Dorsolateral prefrontal cortex (tissue), 120 donors: ENCODE measurements at regions of chr11 and their contacts with region 1.

Region 1: DNA sequence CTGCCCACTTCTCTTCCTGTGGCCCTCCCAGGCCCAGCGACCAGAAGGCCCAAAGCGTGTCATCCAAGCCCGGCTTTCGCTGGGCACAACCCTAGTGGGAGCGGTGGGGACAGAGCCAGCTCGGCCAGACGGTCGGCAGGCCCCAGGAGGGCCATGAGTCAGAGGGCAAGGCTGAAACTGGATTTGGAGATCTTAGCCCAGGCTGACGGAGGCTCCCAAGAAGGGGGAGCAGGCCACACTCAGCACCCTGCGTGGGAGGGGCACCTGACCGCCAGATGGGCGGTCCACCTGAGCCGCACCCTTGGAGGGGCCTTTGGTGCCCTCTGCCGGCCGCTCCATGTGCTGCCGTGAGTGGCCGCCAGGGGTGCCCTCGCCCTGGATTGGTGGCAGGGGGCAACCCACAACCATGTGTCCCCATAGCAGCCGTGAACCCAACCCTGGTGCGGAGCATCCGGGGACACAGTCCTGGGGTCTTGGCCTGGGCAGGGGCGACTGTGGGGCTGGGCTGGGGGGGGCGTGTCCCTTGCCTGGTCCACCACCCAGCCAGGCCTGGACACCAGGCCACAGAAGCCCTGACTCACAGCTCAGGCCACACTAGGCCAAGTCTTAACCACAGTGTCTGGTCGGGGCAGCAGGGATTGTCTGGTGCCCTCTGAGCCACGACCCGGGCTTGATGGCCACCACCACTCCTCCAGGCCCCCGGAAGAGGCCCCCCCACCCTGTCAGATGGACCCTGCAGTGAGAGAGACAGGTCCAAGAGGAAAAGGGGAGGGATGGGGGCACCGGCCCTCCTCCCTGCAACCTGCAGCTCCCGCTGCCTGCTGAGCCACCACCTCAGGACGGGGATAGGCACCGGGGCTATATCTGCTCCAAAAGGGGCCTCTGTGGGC is 19.2 kb upstream of the TALDO1 start:
- DNase-seq: peak; percentile 67 to 85 (median 76)
- H3K4me3 ChIP-seq: peak overlapping the region in 6 of 59 donors; percentile 12 to 65 (median 24)
- H3K27ac ChIP-seq: peak overlapping the region; percentile 65 to 99 (median 96)
- H3K27me3 ChIP-seq: peaks cover 0 to 46% (median 12%) of the 10 kb centered on the region in 45 donors
- CTCF ChIP-seq: peak; percentile 41 to 100 (median 97)

Region 2: GRCh38 chr11:554824-555472 is 173.2 kb before region 1 on chr11:
- intact Hi-C with region 1: loop called (anchors 2 kb)
- DNase-seq: peak in 2 of 10 donors; percentile 62 to 73
- H3K4me3 ChIP-seq: peak overlapping the region in 38 of 59 donors; percentile 11 to 54 (median 34)
- H3K27ac ChIP-seq: no peak overlapping the region
- H3K27me3 ChIP-seq: peaks cover 0 to 81% (median 56%) of the 10 kb centered on the region in 45 donors
- CTCF ChIP-seq: peak; percentile 12 to 67 (median 50)

Region 3: DNA sequence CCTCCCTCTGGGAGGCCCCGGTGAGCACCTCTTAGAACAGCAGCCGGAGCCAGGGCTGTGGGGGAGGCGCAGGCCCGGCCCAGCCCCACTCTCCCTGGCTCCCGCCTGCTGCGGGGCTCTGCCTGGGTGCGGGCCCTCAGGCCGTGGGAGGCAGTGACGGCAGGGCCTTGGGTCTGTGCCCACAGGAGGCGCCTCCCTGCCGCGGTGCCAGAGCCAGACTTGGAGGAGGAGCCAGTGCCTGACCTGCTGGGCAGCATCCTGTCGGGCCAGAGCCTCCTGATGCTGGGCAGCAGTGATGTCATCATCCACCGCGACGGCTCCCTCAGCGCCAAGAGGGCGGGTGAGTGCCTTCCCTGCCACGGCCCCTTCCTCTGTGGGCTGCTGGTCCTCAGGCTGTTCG is 121.8 kb before region 1 on chr11:
- intact Hi-C with region 1: no loop called
- DNase-seq: peak in 8 of 10 donors; percentile 33 to 88 (median 64)
- H3K4me3 ChIP-seq: no peak overlapping the region
- H3K27ac ChIP-seq: peak overlapping the region in 34 of 59 donors; percentile 5 to 82 (median 49)
- H3K27me3 ChIP-seq: no peaks in the 10 kb centered on the region
- CTCF ChIP-seq: no peak

Region 4: GRCh38 chr11:662689-663274 is 65.3 kb before region 1 on chr11:
- intact Hi-C with region 1: loop called (anchors 1 to 5 kb)
- DNase-seq: peak in 9 of 10 donors; percentile 50 to 79 (median 69)
- H3K4me3 ChIP-seq: no peak overlapping the region
- H3K27ac ChIP-seq: no peak overlapping the region
- H3K27me3 ChIP-seq: no peaks in the 10 kb centered on the region
- CTCF ChIP-seq: peak; percentile 35 to 93 (median 79)

Region 5: DNA sequence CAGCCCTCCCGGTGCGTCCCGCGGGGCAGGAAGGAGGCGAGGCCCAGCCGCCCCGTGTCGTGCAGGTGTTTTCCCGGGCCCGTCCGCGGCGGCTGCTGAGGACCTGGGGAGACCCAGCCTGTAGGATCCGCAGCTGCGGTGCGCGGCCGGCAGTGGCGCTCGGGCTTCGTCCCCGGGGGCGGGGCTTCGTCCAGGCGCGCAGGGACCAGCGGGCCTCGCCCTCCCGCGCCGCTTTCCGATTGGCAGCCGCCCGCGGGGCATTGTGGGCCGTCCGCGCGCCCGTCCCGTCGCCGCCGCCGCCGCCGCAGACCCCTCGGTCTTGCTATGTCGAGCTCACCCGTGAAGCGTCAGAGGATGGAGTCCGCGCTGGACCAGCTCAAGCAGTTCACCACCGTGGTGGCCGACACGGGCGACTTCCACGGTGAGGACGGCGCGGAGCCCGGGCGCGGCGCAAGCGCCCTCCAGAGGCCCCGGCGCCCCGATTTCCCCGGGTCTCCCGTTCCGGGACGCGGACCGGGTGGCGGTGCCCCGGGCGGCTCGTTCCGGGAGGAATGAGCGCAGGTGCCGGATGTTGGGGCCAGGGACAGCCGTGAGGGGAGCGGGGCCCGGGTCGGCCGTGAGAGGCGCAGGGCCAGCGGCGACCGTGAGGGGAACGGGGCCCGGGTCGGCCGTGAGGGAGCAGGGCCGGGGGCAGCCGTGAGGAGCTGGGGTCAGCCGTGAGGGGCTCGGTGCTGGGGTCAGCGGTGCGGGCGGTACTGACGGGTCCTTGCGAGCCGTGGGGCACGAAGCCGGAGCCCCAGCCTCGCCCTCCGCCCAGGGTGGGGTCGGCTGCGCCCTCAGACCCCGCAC is 19.3 kb after region 1 on chr11 and contains the start of gene TALDO1:
- intact Hi-C with region 1: loop called in 1 of 2 experiments (anchors 2 kb)
- DNase-seq: peak; percentile 87 to 98 (median 93)
- H3K4me3 ChIP-seq: peak within 1 kb of the TSS; percentile 72 to 99 (median 96)
- H3K27ac ChIP-seq: peak within 1 kb of the TSS; percentile 89 to 99 (median 97)
- H3K27me3 ChIP-seq: no peaks in the 10 kb centered on the region
- CTCF ChIP-seq: peak in 49 of 56 donors; percentile 11 to 62 (median 32)
- total RNA-seq, gene TALDO1: 58.9 to 258 (median 114) TPM

Region 6: GRCh38 chr11:765025-765801 is 37.1 kb after region 1 on chr11:
- intact Hi-C with region 1: loop called (anchors 1 to 5 kb)
- DNase-seq: peak in 8 of 10 donors; percentile 44 to 78 (median 70)
- H3K4me3 ChIP-seq: no peak overlapping the region
- H3K27ac ChIP-seq: peak overlapping the region in 52 of 59 donors; percentile 4 to 84 (median 59)
- H3K27me3 ChIP-seq: no peaks in the 10 kb centered on the region
- CTCF ChIP-seq: peak in 54 of 56 donors; percentile 19 to 82 (median 66)